Pancreas (tissue), 10 donors: ENCODE measurements at regions of chr3 and their contacts with region 1.

Region 1: DNA sequence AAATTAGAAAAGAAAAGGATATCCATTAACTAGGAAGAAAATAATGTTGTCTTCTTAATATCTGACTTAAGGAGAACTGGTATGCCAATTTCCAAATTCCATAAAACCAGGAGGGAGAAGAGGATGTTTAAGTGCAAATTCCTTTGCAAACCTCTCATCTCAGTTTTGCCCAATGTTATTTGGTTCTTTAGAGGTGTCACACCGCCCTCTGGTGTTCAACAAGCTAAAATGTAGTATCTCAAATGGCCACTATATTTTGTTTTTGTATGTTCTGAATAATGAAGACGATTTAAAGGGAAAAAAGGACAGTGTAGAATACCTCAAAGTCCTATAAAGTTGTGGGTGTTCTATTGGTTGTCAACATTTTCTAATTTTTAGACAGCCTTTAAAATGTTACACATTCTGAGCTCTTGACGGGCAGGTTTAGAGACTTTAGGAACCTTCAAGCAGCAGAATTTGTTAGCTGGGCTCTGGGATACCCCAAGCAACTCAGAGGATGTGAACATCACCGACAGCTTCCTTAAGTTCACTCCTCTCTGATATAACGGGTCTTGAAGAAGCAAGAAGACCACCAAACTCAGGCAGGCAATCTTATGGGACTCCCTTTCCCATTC is 458.3 kb downstream of the MFSD1 start:
- DNase-seq: peak in 3 of 6 donors; percentile 17 to 58 (median 20)
- ATAC-seq: peak in 3 of 4 donors; percentile 76 to 81 (median 80)
- H3K4me3 ChIP-seq: no peak overlapping the region
- H3K27ac ChIP-seq: no peak overlapping the region
- H3K4me1 ChIP-seq: no peaks in the 10 kb centered on the region
- H3K27me3 ChIP-seq: peaks cover 0 to 8% (median 0%) of the 10 kb centered on the region in 4 donors
- CTCF ChIP-seq: peak; percentile 48 to 73 (median 66)

Region 2: DNA sequence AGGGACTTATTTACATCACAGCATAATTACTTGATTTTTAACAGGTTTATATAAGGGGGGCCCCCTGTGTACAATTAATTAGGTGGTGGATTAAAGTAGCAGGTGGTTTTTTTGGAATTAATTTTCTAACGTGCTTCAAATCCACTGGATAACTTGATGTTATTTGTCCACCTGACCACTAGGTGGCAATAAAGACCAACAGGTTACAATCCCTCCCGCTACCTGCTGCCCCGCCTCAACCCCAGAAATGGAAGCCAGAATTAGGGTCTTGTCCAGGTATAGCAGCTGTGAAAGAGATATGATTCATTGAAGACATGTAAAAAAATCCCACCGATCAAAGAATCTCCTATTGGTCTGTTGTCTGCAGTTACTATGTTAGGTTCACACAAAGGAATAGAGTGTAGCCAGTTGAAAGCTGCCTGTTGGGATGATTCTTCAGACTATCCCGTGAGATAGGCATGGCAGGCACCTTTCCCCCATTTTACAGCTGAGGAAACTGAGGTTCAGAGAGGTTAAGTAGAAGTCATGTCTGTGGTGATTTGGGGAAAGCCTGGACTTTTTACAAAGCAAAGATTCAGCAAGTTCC is 414.3 kb before region 1 on chr3:
- intact Hi-C with region 1: loop called in 2 of 3 experiments (anchors 5 kb)
- DNase-seq: peak in 2 of 6 donors; percentile 9 to 28
- ATAC-seq: peak; percentile 60 to 84 (median 78)
- H3K4me3 ChIP-seq: no peak overlapping the region
- H3K27ac ChIP-seq: no peak overlapping the region
- H3K4me1 ChIP-seq: no peaks in the 10 kb centered on the region
- H3K27me3 ChIP-seq: no peaks in the 10 kb centered on the region
- CTCF ChIP-seq: peak; percentile 53 to 70 (median 63)

Region 3: GRCh38 chr3:158918008-158918407 is 342.1 kb before region 1 on chr3:
- intact Hi-C with region 1: loop called in 2 of 3 experiments (anchors 5 to 10 kb)
- DNase-seq: peak in 4 of 6 donors; percentile 22 to 64 (median 24)
- ATAC-seq: peak; percentile 58 to 89 (median 86)
- H3K4me3 ChIP-seq: no peak overlapping the region
- H3K27ac ChIP-seq: no peak overlapping the region
- H3K4me1 ChIP-seq: no peaks in the 10 kb centered on the region
- H3K27me3 ChIP-seq: no peaks in the 10 kb centered on the region
- CTCF ChIP-seq: peak; percentile 24 to 46 (median 42)

Region 4: DNA sequence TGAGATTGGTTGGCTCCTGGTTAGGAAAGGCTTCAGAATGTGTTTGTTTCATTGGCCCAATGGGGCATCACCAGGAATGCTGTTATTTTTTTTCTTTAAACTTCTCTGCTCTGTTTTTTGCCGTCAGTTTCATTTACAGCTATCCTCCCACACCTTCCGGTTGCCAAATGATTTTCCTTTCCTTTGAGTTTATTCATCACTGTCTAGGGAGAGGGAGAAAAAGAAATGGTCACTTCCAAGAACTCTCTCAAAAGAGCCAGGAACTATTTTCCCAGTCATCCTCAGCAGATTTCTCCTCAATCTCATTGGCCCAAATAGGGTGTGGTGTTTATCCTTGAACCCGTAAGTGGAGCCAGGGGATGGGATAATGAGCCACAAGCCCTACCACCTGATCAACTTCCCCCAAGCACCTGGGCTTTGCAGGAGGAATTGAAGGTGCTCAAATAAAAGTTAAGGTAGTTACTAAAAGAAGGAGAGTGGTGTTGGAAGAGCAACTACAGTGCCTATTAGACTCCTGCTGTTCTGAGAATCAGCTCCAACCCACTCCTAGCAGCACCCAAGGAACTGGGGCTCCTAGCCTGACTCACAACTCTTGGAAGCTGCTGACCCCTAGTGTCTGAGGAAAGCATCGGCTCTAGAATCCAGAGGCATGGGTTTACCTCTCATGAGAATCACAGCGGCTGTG is 544.7 kb after region 1 on chr3:
- intact Hi-C with region 1: loop called in 1 of 3 experiments (anchors 5 kb)
- DNase-seq: peak in 4 of 6 donors; percentile 33 to 65 (median 46)
- ATAC-seq: peak; percentile 86 to 98 (median 96)
- H3K4me3 ChIP-seq: no peak overlapping the region
- H3K27ac ChIP-seq: no peak overlapping the region
- H3K4me1 ChIP-seq: no peaks in the 10 kb centered on the region
- H3K27me3 ChIP-seq: no peaks in the 10 kb centered on the region
- CTCF ChIP-seq: peak; percentile 50 to 77 (median 69)